Mammary epithelial cell (primary cell): ENCODE measurements at regions of chr7 and their contacts with region 1.

Region 1: DNA sequence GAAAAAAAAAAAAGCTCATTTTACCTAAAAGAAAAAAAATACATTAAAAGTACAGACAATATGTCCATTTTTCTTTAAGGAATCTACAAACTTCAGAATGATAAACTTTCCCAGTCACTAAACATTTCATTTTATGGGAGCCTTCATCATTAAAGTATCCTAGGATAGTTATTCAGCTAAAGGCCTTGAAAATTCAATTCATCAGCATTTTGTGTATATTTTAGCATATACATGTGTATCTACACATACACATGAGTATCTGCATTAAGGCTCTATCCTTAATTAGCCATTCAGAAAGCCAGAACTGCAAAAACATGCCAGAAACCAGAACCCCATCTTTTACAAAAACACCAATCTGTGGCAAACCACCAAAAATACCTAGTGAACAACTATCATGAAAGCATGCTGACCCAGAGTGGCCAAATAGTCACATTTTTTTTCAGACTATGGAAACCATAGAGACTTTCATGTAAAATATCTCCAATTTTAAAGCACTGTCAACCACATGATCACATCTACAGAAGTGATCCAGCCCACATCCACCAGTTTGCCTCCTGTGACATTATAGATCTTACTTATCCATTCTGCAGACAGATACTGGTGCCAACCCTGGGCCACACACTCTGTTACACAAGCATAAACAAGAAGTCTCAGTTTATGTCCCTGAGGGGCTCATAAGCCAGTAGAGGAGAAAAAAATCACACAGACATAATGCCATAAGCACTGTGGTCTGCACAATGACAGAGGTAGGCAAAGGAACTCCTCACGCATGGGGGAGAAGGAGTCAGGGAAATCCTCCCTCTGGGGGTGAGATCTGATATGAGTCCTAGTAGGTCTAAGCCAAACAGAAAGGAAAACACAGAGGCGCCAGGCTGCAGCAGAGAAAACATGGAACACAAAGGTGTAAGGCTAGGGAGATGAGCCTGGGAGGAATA is 79.2 kb downstream of the SRPK2 start:
- DNase-seq: no peak
- H3K4me3 ChIP-seq: no peak overlapping the region
- H3K27ac ChIP-seq: no peak overlapping the region
- H3K4me1 ChIP-seq: no peaks in the 10 kb centered on the region
- H3K27me3 ChIP-seq: no peaks in the 10 kb centered on the region
- CTCF ChIP-seq: no peak

Region 2: DNA sequence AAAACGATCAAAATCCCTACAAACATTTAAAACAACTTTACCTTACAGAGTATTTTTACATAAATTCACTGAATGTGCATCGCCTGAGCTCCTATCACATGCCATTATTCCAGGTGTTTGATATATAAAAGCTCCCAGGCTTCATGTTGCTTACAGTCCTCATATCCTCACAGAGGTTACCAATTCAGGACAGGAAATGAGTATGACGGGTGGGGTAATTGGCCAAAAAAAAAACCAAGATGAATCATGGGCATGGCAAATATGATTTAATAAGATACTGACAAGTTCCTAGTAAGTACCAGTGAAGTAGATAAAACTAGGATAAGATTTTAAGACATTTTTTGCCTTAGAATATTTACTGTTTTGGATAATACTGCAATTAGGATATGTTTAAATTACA is 159.7 kb before region 1 on chr7:
- CTCF ChIA-PET with region 1: no interaction called
- dilution Hi-C with region 1: no loop called
- in situ Hi-C with region 1: no loop called
- intact Hi-C with region 1: no loop called
- DNase-seq: peak; percentile 79
- H3K4me3 ChIP-seq: no peak overlapping the region
- H3K27ac ChIP-seq: peak overlapping the region; percentile 30
- H3K4me1 ChIP-seq: peaks cover 10% of the 10 kb centered on the region
- H3K27me3 ChIP-seq: no peaks in the 10 kb centered on the region
- CTCF ChIP-seq: no peak

Region 3: DNA sequence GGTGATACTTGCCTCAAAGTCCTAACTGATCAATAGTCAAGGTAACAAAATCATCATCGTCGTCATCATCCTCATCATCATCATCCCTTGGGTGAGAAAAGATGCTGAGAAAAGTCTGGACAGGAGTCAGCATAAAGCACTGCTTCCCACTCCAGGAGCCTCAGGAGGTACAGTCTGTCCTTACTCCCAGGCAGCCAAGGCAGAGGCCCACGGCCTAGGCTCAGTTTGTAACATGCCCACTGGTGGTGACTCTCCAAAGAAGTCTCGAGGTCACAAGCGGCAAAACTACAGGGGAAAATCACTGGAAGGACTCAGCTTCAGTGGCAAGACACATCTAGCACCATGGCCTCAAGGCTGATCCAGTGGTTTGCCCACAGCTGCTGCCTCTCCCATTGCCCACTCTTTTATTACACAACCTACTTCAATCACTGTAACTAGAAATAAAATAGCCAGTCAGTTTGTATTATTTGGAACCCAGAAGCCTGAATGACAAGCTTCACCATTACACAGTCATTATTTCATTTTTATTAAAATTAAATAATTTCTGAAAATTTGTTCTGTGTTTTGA is 71.2 kb before region 1 on chr7:
- CTCF ChIA-PET with region 1: no interaction called
- dilution Hi-C with region 1: loop called (anchors 5 kb)
- in situ Hi-C with region 1: no loop called
- intact Hi-C with region 1: no loop called
- DNase-seq: no peak
- H3K4me3 ChIP-seq: no peak overlapping the region
- H3K27ac ChIP-seq: no peak overlapping the region
- H3K4me1 ChIP-seq: peaks cover 14% of the 10 kb centered on the region
- H3K27me3 ChIP-seq: no peaks in the 10 kb centered on the region
- CTCF ChIP-seq: no peak

Region 4: GRCh38 chr7:105278973-105279687 is 30.4 kb before region 1 on chr7:
- CTCF ChIA-PET with region 1: no interaction called
- dilution Hi-C with region 1: no loop called
- in situ Hi-C with region 1: no loop called
- intact Hi-C with region 1: no loop called
- DNase-seq: no peak
- H3K4me3 ChIP-seq: peak overlapping the region in 1 of 3 experiments; percentile 9
- H3K27ac ChIP-seq: no peak overlapping the region
- H3K4me1 ChIP-seq: peaks cover 20% of the 10 kb centered on the region
- H3K27me3 ChIP-seq: no peaks in the 10 kb centered on the region
- CTCF ChIP-seq: no peak

Region 5: GRCh38 chr7:105387621-105388372 is 78.3 kb after region 1 on chr7:
- CTCF ChIA-PET with region 1: no interaction called
- dilution Hi-C with region 1: no loop called
- in situ Hi-C with region 1: no loop called
- intact Hi-C with region 1: no loop called
- DNase-seq: peak; percentile 63
- H3K4me3 ChIP-seq: peak overlapping the region; percentile 79 to 91 (median 90)
- H3K27ac ChIP-seq: peak overlapping the region; percentile 60
- H3K4me1 ChIP-seq: peaks cover 10% of the 10 kb centered on the region
- H3K27me3 ChIP-seq: no peaks in the 10 kb centered on the region
- CTCF ChIP-seq: peak in 1 of 2 donors; percentile 7